ENCODE measurements at regions of chr7 and their contacts with region 1.

Region 1: GRCh38 chr7:31744294-31744874 is 57.4 kb downstream of the PPP1R17 start:
- DNase-seq: peak; percentile 77
- ATAC-seq: peak; percentile 65

Region 2: DNA sequence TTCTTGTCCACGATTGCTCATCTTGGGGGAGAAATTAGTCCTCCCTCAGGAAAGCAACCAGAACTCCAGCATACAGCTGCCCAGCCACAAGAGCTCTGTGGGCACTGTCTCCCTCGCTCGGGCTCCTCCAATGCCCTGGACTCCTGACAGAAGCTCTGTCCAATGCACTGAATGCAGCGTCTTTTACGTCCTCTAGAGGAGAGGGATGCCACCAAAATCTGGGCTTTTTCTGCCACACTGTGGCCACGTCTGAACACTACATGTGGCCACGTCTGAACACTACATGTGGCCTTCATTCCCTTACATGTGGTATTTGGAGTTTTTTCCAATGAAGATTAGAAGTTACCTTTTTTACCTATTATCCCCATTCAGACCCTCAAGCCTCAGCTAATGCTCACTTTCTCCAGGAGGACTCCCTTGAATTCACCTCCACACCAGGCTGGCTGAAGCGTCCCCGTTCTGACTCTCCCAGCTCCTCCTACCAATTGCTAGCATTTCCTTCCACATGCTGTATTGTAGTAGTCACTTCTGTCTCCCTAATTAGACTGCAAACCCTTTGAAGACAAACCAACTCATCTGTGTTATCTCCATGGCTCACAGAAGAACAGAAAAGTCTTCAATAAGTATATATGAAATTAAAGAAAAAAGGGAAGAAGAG is 460.1 kb after region 1 on chr7:
- intact Hi-C with region 1: loop called (anchors 10 kb)
- DNase-seq: peak; percentile 74
- ATAC-seq: peak; percentile 94

Region 3: GRCh38 chr7:32364581-32364980 is 620.2 kb after region 1 on chr7:
- intact Hi-C with region 1: loop called (anchors 10 kb)
- DNase-seq: no peak
- ATAC-seq: no peak